T-cell (primary cell): ENCODE measurements at regions of chr2 and their contacts with region 1.

Region 1: GRCh38 chr2:151945191-151945590 is 117.0 kb upstream of the ARL5A start:
- DNase-seq: no peak
- ATAC-seq: no peak
- H3K4me3 ChIP-seq: no peak overlapping the region
- H3K4me3 Mint-ChIP-seq: no peak overlapping the region
- H3K27ac ChIP-seq: no peak overlapping the region
- H3K27ac Mint-ChIP-seq: no peak overlapping the region
- H3K4me1 ChIP-seq: no peaks in the 10 kb centered on the region
- H3K4me1 Mint-ChIP-seq: peaks cover 6 to 11% (median 9%) of the 10 kb centered on the region in 3 donors
- H3K27me3 ChIP-seq: peaks cover 0 to 4% of the 10 kb centered on the region in 2 experiments
- H3K27me3 Mint-ChIP-seq: peaks cover 13 to 19% of the 10 kb centered on the region in 2 donors

Region 2: GRCh38 chr2:151552287-151552686 is 392.9 kb before region 1 on chr2:
- CTCF ChIA-PET with region 1: interaction called in 1 of 2 experiments, 10 read pairs
- POLR2A ChIA-PET with region 1: no interaction called
- DNase-seq: no peak
- ATAC-seq: no peak
- H3K4me3 ChIP-seq: no peak overlapping the region
- H3K4me3 Mint-ChIP-seq: no peak overlapping the region
- H3K27ac ChIP-seq: no peak overlapping the region
- H3K27ac Mint-ChIP-seq: no peak overlapping the region
- H3K4me1 ChIP-seq: no peaks in the 10 kb centered on the region
- H3K4me1 Mint-ChIP-seq: no peaks in the 10 kb centered on the region
- H3K27me3 ChIP-seq: peaks cover 0 to 3% of the 10 kb centered on the region in 2 experiments
- H3K27me3 Mint-ChIP-seq: no peaks in the 10 kb centered on the region

Region 3: GRCh38 chr2:151905963-151906632 is 39.1 kb before region 1 on chr2:
- CTCF ChIA-PET with region 1: no interaction called
- POLR2A ChIA-PET with region 1: no interaction called
- DNase-seq: no peak
- ATAC-seq: no peak
- H3K4me3 ChIP-seq: no peak overlapping the region
- H3K4me3 Mint-ChIP-seq: no peak overlapping the region
- H3K27ac ChIP-seq: no peak overlapping the region
- H3K27ac Mint-ChIP-seq: no peak overlapping the region
- H3K4me1 ChIP-seq: no peaks in the 10 kb centered on the region
- H3K4me1 Mint-ChIP-seq: no peaks in the 10 kb centered on the region
- H3K27me3 ChIP-seq: peaks cover 0 to 2% of the 10 kb centered on the region in 2 experiments
- H3K27me3 Mint-ChIP-seq: peaks cover 0 to 4% of the 10 kb centered on the region in 2 donors